Right ventricle myocardium inferior (tissue), 1 donor: ENCODE measurements at regions of chr20 and their contacts with region 1.

Region 1: GRCh38 chr20:45890985-45891983 is at the starts of genes CTSA and NEURL2:
- DNase-seq: peak; percentile 98
- ATAC-seq: peak; percentile 84
- total RNA-seq, gene CTSA: 113 TPM
- total RNA-seq, gene NEURL2: 5.0 TPM

Region 2: DNA sequence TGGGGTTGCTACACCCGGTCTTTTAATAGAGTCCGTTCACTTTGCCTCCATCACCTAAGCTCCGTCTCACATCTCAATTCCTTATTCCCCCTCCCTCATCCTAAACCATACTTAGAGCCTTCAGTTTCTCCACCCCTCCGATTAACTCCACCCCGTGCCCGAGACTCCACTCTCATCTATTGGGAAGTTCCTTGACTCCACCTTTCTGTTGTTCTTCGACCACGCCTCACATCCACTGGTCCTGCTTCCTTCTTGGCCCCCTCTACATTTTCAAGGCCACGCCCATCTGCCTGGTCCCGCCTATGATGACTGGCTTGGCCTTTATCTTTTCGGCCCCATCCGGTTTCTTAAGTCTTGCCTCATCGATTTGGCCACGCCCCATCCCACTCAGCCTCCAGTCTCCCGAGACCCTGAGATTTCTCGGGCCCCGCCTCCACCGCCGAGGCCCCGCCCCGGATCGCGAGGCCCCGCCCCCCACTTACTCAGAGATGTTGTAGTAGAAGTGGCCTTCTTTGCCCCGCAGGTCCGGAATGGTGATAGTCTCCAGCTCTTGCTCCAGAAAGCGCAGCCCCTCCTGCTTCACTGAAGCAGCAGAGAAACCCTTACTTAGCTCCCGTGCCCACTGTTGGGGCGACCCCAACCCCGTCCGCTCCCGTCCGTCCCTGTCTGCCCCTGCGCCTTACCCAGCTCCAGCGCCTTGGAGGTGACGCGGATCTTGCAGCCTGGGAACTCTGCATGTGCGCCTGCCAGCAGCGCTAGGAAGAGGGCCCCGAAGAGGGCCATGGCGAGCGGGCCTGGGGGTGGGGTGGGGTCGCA is 19.6 kb after region 1 on chr20:
- intact Hi-C with region 1: loop called (anchors 1 kb)
- DNase-seq: peak; percentile 96
- ATAC-seq: peak; percentile 84

Region 3: GRCh38 chr20:45971675-45972499 is 80.6 kb after region 1 on chr20 and contains the start of gene ZNF335:
- intact Hi-C with region 1: loop called (anchors 2 kb)
- DNase-seq: peak; percentile 98
- ATAC-seq: peak; percentile 96
- total RNA-seq, gene ZNF335: 9.7 TPM